ENCODE measurements at regions of chr10 and their contacts with region 1.

Region 1: GRCh38 chr10:25245165-25245564 is 70.4 kb downstream of the GPR158 start:
- DNase-seq: no peak
- H3K4me3 ChIP-seq: no peak overlapping the region
- CTCF ChIP-seq: no peak
- POLR2A ChIP-seq: no peak

Region 2: GRCh38 chr10:25226775-25227682 is 18.1 kb before region 1 on chr10:
- intact Hi-C with region 1: no loop called
- DNase-seq: no peak
- H3K4me3 ChIP-seq: no peak overlapping the region
- CTCF ChIP-seq: no peak
- POLR2A ChIP-seq: no peak

Region 3: GRCh38 chr10:25263931-25264330 is 18.8 kb after region 1 on chr10:
- intact Hi-C with region 1: loop called (anchors 1 kb)
- DNase-seq: no peak
- H3K4me3 ChIP-seq: no peak overlapping the region
- CTCF ChIP-seq: no peak
- POLR2A ChIP-seq: no peak

Measured in lower leg skin (tissue), 4 donors.